ENCODE measurements at regions of chr11 and their contacts with region 1.

Region 1: DNA sequence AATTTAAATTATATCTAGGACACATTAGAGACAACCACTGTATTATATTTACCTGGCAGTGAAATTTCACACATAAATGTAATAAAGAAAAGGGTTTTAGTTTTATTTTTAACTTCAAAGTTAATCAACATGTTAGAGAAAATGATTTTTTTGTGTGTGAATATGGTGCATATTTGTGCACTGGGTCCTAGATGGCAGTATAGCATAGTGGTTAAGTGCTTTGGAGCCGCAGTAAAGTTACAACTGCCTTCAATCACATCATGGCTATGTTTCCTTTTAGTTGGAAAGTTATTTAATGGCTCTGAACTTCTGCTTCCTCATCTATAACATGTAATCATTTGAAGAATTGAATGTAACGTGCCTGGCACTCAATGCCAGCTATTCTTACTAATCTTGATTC is 108.9 kb upstream of the DDI1 start:
- DNase-seq: no peak
- H3K4me3 Mint-ChIP-seq: no peak overlapping the region
- H3K27ac Mint-ChIP-seq: no peak overlapping the region
- H3K4me1 Mint-ChIP-seq: peaks cover 18% of the 10 kb centered on the region
- H3K27me3 Mint-ChIP-seq: no peaks in the 10 kb centered on the region
- CTCF ChIP-seq: no peak

Region 2: GRCh38 chr11:103842191-103842590 is 85.3 kb before region 1 on chr11:
- CTCF ChIA-PET with region 1: no interaction called
- intact Hi-C with region 1: no loop called
- DNase-seq: no peak
- H3K4me3 Mint-ChIP-seq: no peak overlapping the region
- H3K27ac Mint-ChIP-seq: no peak overlapping the region
- H3K4me1 Mint-ChIP-seq: peaks cover 14% of the 10 kb centered on the region
- H3K27me3 Mint-ChIP-seq: no peaks in the 10 kb centered on the region
- CTCF ChIP-seq: no peak

Region 3: GRCh38 chr11:104151404-104152204 is 224.1 kb after region 1 on chr11:
- CTCF ChIA-PET with region 1: no interaction called
- intact Hi-C with region 1: loop called (anchors 5 kb)
- DNase-seq: no peak
- H3K4me3 Mint-ChIP-seq: no peak overlapping the region
- H3K27ac Mint-ChIP-seq: no peak overlapping the region
- H3K4me1 Mint-ChIP-seq: no peaks in the 10 kb centered on the region
- H3K27me3 Mint-ChIP-seq: no peaks in the 10 kb centered on the region
- CTCF ChIP-seq: no peak

Region 4: GRCh38 chr11:104161751-104162450 is 234.4 kb after region 1 on chr11:
- CTCF ChIA-PET with region 1: no interaction called
- intact Hi-C with region 1: no loop called
- DNase-seq: no peak
- H3K4me3 Mint-ChIP-seq: no peak overlapping the region
- H3K27ac Mint-ChIP-seq: no peak overlapping the region
- H3K4me1 Mint-ChIP-seq: no peaks in the 10 kb centered on the region
- H3K27me3 Mint-ChIP-seq: no peaks in the 10 kb centered on the region
- CTCF ChIP-seq: no peak